Activated naive CD4-positive, alpha-beta T cell treated with anti-CD3 and anti-CD28 coated beads for 36 hours (primary cell): ENCODE measurements at regions of chr19 and their contacts with region 1.

Region 1: DNA sequence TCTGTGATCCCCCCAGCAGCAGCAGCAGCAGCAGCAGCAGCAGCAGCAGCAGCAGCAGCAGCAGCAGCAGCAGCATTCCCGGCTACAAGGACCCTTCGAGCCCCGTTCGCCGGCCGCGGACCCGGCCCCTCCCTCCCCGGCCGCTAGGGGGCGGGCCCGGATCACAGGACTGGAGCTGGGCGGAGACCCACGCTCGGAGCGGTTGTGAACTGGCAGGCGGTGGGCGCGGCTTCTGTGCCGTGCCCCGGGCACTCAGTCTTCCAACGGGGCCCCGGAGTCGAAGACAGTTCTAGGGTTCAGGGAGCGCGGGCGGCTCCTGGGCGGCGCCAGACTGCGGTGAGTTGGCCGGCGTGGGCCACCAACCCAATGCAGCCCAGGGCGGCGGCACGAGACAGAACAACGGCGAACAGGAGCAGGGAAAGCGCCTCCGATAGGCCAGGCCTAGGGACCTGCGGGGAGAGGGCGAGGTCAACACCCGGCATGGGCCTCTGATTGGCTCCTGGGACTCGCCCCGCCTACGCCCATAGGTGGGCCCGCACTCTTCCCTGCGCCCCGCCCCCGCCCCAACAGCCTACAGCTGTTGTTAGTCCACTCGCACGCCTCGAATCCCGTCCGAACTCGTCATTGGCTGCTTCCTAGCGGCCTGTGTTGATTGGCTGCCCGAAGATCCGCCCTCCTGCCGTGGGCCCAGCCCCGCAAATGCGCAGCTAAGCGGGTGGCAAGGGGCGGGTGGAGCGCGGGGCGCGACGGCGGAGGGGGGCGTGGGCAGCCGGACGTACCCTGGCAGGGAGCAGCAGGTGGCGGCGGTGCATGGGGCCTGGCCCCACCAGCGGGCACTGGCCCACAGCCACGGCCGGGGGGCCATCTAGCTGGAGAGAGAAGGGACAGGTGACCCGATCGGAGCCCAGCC is 1.4 kb upstream of the SIX5 start:
- DNase-seq: peak; percentile 89
- H3K4me3 Mint-ChIP-seq: peak overlapping the region; percentile 81
- H3K27ac Mint-ChIP-seq: no peak overlapping the region
- H3K4me1 Mint-ChIP-seq: peaks cover 10% of the 10 kb centered on the region
- H3K27me3 Mint-ChIP-seq: peaks cover 16% of the 10 kb centered on the region

Region 2: DNA sequence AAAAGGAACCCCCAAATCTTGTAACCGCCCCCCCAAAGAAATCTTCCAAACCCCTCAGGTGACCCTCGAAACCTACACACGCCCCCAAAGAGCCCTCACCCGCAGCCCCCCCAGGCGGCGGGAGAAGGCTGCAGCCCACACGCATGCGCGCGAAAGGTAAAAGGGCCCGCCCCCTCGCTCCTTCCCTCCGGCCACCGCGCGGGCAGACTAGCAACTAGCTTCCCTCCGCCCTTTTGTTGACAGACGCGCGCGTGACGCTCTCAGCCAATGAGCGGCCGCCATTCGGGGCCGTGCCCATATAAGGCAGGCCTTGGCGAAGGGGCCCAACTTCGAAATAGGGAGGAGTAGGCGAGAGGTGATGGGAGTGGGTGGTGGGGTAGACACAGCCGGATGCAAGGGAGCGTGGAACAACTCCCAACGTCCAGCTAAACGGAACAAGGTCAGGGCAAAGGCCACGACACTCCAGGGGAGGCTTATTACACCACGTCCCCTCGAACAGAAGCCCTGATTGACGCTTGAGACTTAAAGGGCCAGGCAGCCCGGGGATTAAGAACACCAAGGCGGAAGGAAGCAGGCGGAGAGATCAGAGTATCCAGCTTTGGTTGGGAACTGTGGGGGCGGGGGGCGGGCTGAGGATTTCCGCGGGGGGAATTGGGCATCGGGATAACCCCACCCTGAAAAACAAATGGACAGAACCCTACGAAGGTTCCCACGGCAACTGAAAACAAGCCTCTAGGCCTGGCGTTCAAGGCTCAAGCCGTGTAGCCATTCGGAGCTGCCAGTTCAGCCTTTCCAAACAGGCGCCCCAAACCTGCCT is 53.1 kb before region 1 on chr19:
- CTCF ChIA-PET with region 1: interaction called, 6 read pairs
- intact Hi-C with region 1: loop called (anchors 1 kb)
- DNase-seq: peak; percentile 99
- H3K4me3 Mint-ChIP-seq: peak overlapping the region; percentile 96
- H3K27ac Mint-ChIP-seq: peak overlapping the region; percentile 97
- H3K4me1 Mint-ChIP-seq: peaks cover 41% of the 10 kb centered on the region
- H3K27me3 Mint-ChIP-seq: no peaks in the 10 kb centered on the region

Region 3: DNA sequence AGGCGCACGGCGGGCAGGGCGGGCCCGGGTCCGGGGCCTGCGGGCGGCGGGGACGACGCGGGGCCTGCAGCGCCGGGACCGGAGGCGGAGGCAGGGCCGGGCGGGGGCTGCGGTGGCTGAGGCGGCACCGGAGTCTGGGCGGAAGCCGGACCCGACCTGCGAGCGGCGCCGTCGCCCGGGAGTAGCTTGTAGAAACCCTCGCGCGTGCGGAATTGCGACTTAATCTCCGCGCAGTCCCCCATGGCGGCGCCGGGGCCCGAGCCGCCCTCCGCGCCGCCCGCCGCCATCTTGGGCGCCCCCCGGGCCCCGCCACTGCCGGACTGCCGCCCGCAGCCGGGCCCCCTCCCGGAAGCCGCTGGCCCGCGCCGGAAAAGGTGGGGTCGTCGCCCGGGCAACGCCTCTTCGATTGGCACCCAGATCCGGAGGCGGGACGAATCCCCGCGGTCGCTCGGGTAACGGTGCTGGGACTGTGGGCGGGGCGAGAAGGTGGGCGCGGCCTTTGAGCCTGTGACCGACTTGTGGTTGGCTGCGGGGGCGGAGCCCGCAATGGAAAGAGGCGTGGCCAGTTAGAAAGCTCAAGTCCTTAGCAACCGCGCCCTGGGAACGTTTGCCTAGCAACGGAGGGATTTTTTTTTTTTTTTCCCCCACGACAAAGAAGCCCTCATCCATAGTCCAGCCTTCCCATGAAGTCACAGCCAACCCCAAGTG is 22.2 kb after region 1 on chr19 and contains the start of gene DMWD:
- CTCF ChIA-PET with region 1: interaction called, 127 read pairs
- intact Hi-C with region 1: loop called (anchors 1 kb)
- DNase-seq: peak; percentile 100
- H3K4me3 Mint-ChIP-seq: peak within 1 kb of the TSS; percentile 93
- H3K27ac Mint-ChIP-seq: peak within 1 kb of the TSS; percentile 71
- H3K4me1 Mint-ChIP-seq: peaks cover 24% of the 10 kb centered on the region
- H3K27me3 Mint-ChIP-seq: peaks cover 13% of the 10 kb centered on the region
- total RNA-seq, gene DMWD: 28.6 to 29.1 TPM

Region 4: GRCh38 chr19:45817010-45817724 is 46.7 kb after region 1 on chr19:
- CTCF ChIA-PET with region 1: interaction called, 12 read pairs
- intact Hi-C with region 1: loop called (anchors 1 kb)
- DNase-seq: peak; percentile 99
- H3K4me3 Mint-ChIP-seq: no peak overlapping the region
- H3K27ac Mint-ChIP-seq: no peak overlapping the region
- H3K4me1 Mint-ChIP-seq: peaks cover 10% of the 10 kb centered on the region
- H3K27me3 Mint-ChIP-seq: peaks cover 19% of the 10 kb centered on the region

Region 5: GRCh38 chr19:45848922-45849321 is 78.5 kb after region 1 on chr19:
- CTCF ChIA-PET with region 1: no interaction called
- intact Hi-C with region 1: no loop called
- DNase-seq: no peak
- H3K4me3 Mint-ChIP-seq: no peak overlapping the region
- H3K27ac Mint-ChIP-seq: no peak overlapping the region
- H3K4me1 Mint-ChIP-seq: no peaks in the 10 kb centered on the region
- H3K27me3 Mint-ChIP-seq: no peaks in the 10 kb centered on the region

Region 6: DNA sequence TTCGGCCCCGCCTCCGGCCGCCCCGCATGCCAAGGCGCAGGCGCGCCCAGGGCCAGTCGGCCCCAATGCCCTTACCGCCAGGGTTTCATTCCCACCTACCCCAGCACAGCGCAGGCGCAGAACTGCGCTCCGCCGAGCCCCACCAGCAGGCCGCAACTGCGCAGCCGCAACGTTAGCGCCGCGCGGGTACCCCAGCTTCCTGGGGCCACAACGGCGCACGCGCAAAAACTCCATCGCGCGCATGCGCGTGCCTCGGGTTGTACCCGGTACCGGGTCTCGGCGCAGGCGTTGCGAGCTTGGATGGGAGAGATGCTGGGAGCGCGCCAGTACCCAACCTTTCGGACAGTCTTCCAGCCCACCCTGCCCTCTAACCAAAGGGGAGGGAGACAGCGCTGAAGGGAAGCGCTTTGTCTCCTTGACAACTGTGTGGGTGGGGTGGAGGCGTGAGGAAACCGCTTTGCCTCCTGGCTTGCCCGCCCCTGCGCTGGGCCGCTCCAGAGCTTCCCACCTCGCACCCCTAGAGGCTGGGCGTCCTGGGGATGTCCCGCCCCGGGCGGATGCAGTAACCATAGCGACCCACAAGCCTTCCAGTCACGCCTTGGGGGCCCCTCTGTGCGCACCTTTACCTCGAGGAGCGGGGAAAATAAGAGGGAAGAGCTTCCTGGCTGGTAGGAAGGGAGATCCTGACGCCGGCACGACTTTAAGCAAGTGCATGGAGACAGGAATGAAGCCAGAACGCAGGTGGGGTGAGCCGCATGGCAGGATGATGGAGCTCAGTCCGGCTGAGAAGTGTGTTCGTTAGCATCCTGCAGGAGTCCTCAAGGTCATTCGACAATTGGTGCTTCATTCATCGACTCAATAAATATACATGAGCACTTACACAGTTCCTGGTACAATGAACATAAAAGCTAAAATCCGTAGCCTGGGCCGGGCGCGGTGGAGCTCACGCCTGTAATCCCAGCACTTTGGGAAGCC is 132.5 kb after region 1 on chr19:
- CTCF ChIA-PET with region 1: interaction called, 5 read pairs
- intact Hi-C with region 1: loop called (anchors 1 kb)
- DNase-seq: peak; percentile 99
- H3K4me3 Mint-ChIP-seq: peak overlapping the region; percentile 88
- H3K27ac Mint-ChIP-seq: peak overlapping the region; percentile 71
- H3K4me1 Mint-ChIP-seq: peaks cover 12% of the 10 kb centered on the region
- H3K27me3 Mint-ChIP-seq: no peaks in the 10 kb centered on the region

Region 7: GRCh38 chr19:45913874-45914830 is 143.7 kb after region 1 on chr19 and contains the start of gene NANOS2:
- CTCF ChIA-PET with region 1: no interaction called
- intact Hi-C with region 1: no loop called
- DNase-seq: no peak
- H3K4me3 Mint-ChIP-seq: no peak within 1 kb of the TSS
- H3K27ac Mint-ChIP-seq: no peak within 1 kb of the TSS
- H3K4me1 Mint-ChIP-seq: no peaks in the 10 kb centered on the region
- H3K27me3 Mint-ChIP-seq: peaks cover 15% of the 10 kb centered on the region
- total RNA-seq, gene NANOS2: not detected

Region 8: GRCh38 chr19:45927565-45928261 is 157.3 kb after region 1 on chr19:
- CTCF ChIA-PET with region 1: no interaction called
- intact Hi-C with region 1: no loop called
- DNase-seq: peak; percentile 96
- H3K4me3 Mint-ChIP-seq: peak overlapping the region; percentile 74
- H3K27ac Mint-ChIP-seq: no peak overlapping the region
- H3K4me1 Mint-ChIP-seq: peaks cover 7% of the 10 kb centered on the region
- H3K27me3 Mint-ChIP-seq: peaks cover 5% of the 10 kb centered on the region

Region 9: DNA sequence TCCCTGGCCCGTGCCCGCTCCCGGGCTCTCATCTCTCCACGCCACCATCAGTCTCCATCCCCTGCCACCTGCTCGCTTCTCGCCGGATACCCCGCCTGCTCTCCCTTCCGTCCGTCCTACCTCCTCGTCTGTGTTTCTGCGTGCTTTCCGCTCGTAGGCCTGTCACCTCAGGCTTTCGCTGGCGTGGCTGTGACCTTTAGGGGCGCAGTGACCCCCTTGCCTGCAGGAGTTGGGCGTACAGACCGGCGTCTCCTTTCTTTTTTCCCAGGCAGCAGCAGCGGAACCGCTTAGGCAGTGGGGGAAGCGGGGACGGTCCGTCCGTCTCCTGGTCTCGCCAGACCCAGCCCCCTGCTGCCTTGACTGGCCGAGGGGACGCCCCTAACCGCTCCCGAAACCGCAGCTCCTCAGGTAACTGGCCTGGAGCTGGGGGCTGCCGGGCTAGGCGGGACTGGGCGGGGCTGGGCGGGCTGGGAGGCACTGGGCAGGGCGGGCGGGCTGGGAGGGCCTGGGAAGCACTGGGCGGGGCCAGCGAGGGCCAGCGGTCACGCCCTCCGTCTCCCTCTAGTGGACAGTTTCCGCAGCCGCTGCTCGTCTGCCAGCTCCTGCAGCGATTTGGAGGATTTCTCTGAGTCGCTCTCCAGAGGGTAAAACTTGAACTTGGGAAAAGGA is 246.1 kb after region 1 on chr19:
- CTCF ChIA-PET with region 1: no interaction called
- intact Hi-C with region 1: loop called (anchors 1 kb)
- DNase-seq: peak; percentile 86
- H3K4me3 Mint-ChIP-seq: peak overlapping the region; percentile 74
- H3K27ac Mint-ChIP-seq: peak overlapping the region; percentile 62
- H3K4me1 Mint-ChIP-seq: peaks cover 17% of the 10 kb centered on the region
- H3K27me3 Mint-ChIP-seq: peaks cover 15% of the 10 kb centered on the region